ENCODE measurements at regions of chr19 and their contacts with region 1.

Region 1: GRCh38 chr19:44723952-44724319 is 24.6 kb upstream of the BCL3 start:
- DNase-seq: peak; percentile 88
- H3K4me3 Mint-ChIP-seq: no peak overlapping the region
- H3K27ac Mint-ChIP-seq: no peak overlapping the region
- H3K4me1 Mint-ChIP-seq: peaks cover 45% of the 10 kb centered on the region
- H3K27me3 Mint-ChIP-seq: no peaks in the 10 kb centered on the region

Region 2: GRCh38 chr19:44570984-44571684 is 152.8 kb before region 1 on chr19:
- CTCF ChIA-PET with region 1: interaction called, 4 read pairs
- intact Hi-C with region 1: loop called (anchors 1 kb)
- DNase-seq: peak; percentile 80
- H3K4me3 Mint-ChIP-seq: no peak overlapping the region
- H3K27ac Mint-ChIP-seq: no peak overlapping the region
- H3K4me1 Mint-ChIP-seq: no peaks in the 10 kb centered on the region
- H3K27me3 Mint-ChIP-seq: peaks cover 7% of the 10 kb centered on the region

Region 3: GRCh38 chr19:44702551-44703176 is 21.3 kb before region 1 on chr19:
- CTCF ChIA-PET with region 1: interaction called, 14 read pairs
- intact Hi-C with region 1: no loop called
- DNase-seq: no peak
- H3K4me3 Mint-ChIP-seq: no peak overlapping the region
- H3K27ac Mint-ChIP-seq: no peak overlapping the region
- H3K4me1 Mint-ChIP-seq: no peaks in the 10 kb centered on the region
- H3K27me3 Mint-ChIP-seq: peaks cover 2% of the 10 kb centered on the region

Region 4: DNA sequence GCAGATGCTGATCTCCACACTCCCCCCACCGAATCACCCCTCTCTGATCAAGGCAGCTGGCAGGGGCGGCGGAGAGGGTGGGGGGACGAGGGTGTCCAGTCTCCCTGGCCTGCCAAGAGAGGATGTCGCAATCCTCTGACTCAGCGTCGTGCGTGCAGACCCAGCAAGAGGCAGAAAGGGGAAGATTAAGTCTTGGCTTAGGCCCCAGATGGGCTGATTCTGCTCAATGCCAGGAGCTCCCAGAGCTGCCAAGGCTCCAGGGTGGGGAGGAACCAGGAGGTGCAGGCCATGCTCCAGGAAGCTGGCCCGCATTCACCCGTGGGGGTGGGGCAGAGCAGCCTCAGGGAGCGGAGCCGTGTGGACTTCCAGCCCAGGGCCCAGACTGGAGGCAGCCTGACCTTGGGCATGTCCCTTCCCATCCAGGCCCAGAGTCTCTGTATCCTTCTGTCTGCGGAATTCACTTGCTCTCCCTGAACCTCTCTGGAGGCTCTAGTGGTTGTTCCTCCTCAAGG is 18.0 kb after region 1 on chr19:
- CTCF ChIA-PET with region 1: interaction called, 20 read pairs
- intact Hi-C with region 1: no loop called
- DNase-seq: peak; percentile 58
- H3K4me3 Mint-ChIP-seq: no peak overlapping the region
- H3K27ac Mint-ChIP-seq: no peak overlapping the region
- H3K4me1 Mint-ChIP-seq: peaks cover 34% of the 10 kb centered on the region
- H3K27me3 Mint-ChIP-seq: no peaks in the 10 kb centered on the region

Region 5: DNA sequence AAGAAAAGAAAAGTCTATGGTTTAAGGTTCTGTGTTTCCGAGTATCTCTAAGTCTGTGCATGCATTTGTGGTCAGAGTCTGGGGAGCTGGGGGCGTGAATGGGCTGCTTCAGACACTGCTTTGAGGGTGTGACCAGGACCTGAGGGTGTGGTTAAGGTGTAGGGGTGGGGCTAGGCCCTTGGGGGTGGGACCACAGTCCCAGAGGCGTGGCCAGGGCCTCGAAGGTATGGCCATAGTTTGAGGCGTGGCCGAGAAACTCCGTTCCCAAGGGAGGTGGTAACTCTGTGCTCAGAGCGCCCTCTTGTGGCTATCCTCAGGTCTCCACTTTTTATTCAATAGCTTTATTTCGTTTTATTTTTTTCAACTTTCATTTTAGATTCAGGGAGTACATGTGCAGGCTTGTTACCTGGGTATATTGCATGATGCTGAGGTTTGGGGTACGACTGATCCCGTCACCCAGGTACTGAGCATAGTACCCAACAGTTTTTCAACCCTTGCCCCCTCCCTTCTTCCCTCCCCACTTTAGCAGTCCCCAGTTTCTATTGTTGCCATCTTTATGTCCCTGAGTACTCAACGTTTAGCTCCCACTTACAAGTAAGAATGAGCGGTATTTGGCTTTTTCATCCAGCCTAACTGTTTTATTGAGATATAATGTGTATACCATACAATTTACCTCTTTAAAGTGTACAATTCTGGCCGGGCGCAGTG is 46.8 kb after region 1 on chr19:
- CTCF ChIA-PET with region 1: interaction called, 394 read pairs
- intact Hi-C with region 1: loop called (anchors 1 kb)
- DNase-seq: peak; percentile 99
- H3K4me3 Mint-ChIP-seq: peak overlapping the region; percentile 65
- H3K27ac Mint-ChIP-seq: peak overlapping the region; percentile 86
- H3K4me1 Mint-ChIP-seq: peaks cover 29% of the 10 kb centered on the region
- H3K27me3 Mint-ChIP-seq: no peaks in the 10 kb centered on the region

Region 6: DNA sequence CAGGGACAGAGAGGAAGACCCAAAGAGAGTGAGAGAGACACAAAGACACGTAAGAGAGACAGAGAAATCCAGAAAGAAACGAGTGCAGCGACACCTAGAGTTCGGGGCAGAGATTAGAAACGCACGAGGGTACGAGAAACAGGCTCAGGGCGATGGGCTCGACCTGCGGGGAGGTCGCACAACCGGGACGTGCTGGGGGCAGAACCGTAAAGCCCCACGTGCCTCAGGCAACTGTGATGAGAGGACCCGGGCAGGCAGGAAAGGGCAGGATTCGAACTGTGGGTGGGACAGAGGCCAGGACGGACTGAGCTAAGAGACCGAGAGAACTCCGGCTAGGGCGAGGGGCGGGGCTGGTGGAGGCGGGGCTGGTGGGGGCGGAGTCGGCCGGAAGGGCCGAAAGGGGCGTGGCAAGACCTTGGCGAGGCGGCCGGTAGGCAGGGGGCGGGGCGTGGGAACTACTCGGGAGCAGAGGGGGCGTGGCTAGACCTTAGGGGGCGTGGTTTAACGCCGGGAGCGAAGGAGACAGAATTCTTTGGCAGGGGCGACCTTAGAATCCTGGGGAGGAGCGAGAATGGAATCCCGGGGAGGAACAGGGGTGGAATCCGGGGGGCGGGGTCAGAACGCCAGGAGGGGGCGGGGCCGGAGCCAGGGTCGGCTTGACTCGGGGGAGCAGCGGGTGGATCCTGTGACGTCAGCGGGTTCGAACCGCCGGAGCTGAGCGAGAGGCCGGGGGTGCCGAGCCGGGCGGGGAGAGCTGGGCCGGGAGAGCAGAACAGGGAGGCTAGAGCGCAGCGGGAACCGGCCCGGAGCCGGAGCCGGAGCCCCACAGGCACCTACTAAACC is 121.9 kb after region 1 on chr19 and contains the start of gene NECTIN2:
- CTCF ChIA-PET with region 1: interaction called, 5 read pairs
- intact Hi-C with region 1: loop called (anchors 1 kb)
- DNase-seq: peak; percentile 95
- H3K4me3 Mint-ChIP-seq: peak within 1 kb of the TSS; percentile 83
- H3K27ac Mint-ChIP-seq: no peak within 1 kb of the TSS
- H3K4me1 Mint-ChIP-seq: peaks cover 20% of the 10 kb centered on the region
- H3K27me3 Mint-ChIP-seq: peaks cover 18% of the 10 kb centered on the region
- total RNA-seq, gene NECTIN2: 0.88 to 1.1 TPM